OCI-LY7 (cell line): ENCODE measurements at regions of chr2 and their contacts with region 1.

Region 1: DNA sequence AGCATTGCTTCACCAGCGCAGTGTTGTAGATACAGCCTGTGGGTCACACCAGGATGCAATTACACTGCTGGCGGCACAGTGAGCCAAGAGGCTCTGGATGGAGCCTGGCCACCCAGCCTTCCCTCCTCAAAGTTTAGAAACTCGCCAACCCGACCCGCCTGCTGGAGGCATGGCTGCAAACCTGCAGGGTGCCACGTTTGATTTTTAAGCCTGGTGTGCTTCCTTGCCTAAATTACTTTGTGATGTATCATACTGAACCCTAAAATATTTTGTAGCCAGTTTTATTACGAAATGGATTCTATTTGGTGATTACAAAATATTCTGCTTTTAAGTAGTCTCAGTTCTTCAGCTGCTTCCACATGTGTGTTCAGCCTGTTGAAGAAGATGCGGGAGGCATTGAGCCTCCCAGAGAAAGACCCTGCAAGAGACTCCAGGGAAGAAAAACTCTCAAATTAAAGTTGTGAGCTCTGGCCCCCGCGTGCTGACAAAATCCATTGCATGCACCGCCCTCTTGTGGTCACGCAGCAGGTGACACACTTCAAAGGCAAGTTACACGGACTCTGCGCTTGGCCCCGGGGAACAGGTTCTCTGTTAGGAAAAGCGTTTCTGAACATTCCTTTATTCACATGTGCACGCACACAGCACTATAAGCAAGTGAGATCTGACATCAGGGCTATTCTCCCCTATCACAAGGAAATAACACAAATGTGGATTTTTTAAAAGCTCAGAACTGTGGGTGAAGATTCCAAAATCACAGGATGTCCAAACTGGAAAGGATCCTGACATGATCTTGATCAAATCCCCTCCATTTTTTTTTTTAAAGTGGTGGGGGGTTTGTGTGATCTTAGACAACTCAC is 63.0 kb upstream of the TWIST2 start:
- DNase-seq: peak; percentile 52
- H3K4me3 ChIP-seq: no peak overlapping the region
- H3K27ac ChIP-seq: no peak overlapping the region
- H3K4me1 ChIP-seq: no peaks in the 10 kb centered on the region
- CTCF ChIP-seq: peak; percentile 94

Region 2: DNA sequence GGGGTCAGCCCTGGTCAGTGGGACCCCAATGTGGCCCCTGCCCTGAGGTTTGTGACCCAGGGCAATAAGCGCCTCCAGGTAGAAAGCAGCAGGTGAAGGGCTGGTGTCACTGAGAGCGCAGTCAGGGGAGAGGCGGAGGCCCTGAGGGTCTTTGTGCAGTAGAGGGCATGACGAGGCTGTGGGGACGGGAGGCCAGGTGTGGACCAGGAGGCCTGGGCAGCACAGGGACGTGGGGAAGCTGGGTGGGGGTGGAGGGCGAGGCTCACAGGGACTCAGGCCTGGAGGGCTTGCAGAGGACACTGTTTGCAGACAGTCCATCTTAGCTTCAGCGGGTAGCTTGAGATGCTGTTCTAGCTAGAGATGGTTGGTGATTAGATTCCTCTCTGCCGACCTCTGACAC is 432.5 kb before region 1 on chr2:
- CTCF ChIA-PET with region 1: no interaction called
- POLR2A ChIA-PET with region 1: no interaction called
- intact Hi-C with region 1: loop called (anchors 10 kb)
- DNase-seq: no peak
- H3K4me3 ChIP-seq: no peak overlapping the region
- H3K27ac ChIP-seq: no peak overlapping the region
- H3K4me1 ChIP-seq: no peaks in the 10 kb centered on the region
- CTCF ChIP-seq: no peak

Region 3: GRCh38 chr2:239006622-239007300 is 221.9 kb after region 1 on chr2:
- CTCF ChIA-PET with region 1: no interaction called
- POLR2A ChIA-PET with region 1: no interaction called
- intact Hi-C with region 1: no loop called
- DNase-seq: no peak
- H3K4me3 ChIP-seq: no peak overlapping the region
- H3K27ac ChIP-seq: no peak overlapping the region
- H3K4me1 ChIP-seq: no peaks in the 10 kb centered on the region
- CTCF ChIP-seq: no peak